B cell (primary cell): ENCODE measurements at regions of chr2 and their contacts with region 1.

Region 1: GRCh38 chr2:231123362-231123898 is 1.4 kb downstream of the HTR2B start:
- DNase-seq: no peak
- ATAC-seq: no peak
- H3K4me3 ChIP-seq: no peak overlapping the region
- H3K4me3 Mint-ChIP-seq: no peak overlapping the region
- H3K27ac ChIP-seq: no peak overlapping the region
- H3K27ac Mint-ChIP-seq: no peak overlapping the region
- H3K4me1 ChIP-seq: no peaks in the 10 kb centered on the region
- H3K4me1 Mint-ChIP-seq: peaks cover 3% of the 10 kb centered on the region
- H3K27me3 ChIP-seq: no peaks in the 10 kb centered on the region
- H3K27me3 Mint-ChIP-seq: no peaks in the 10 kb centered on the region
- CTCF ChIP-seq: no peak

Region 2: GRCh38 chr2:231104115-231104713 is 19.2 kb before region 1 on chr2:
- CTCF ChIA-PET with region 1: interaction called, 10 read pairs
- POLR2A ChIA-PET with region 1: no interaction called
- intact Hi-C with region 1: no loop called
- DNase-seq: peak; percentile 73
- ATAC-seq: peak; percentile 69
- H3K4me3 ChIP-seq: no peak overlapping the region
- H3K4me3 Mint-ChIP-seq: no peak overlapping the region
- H3K27ac ChIP-seq: no peak overlapping the region
- H3K27ac Mint-ChIP-seq: no peak overlapping the region
- H3K4me1 ChIP-seq: no peaks in the 10 kb centered on the region
- H3K4me1 Mint-ChIP-seq: no peaks in the 10 kb centered on the region
- H3K27me3 ChIP-seq: no peaks in the 10 kb centered on the region
- H3K27me3 Mint-ChIP-seq: no peaks in the 10 kb centered on the region
- CTCF ChIP-seq: peak; percentile 87